Activated CD4-positive, alpha-beta T cell treated with anti-CD3 and anti-CD28 coated beads for 36 hours (primary cell): ENCODE measurements at regions of chr17 and their contacts with region 1.

Region 1: DNA sequence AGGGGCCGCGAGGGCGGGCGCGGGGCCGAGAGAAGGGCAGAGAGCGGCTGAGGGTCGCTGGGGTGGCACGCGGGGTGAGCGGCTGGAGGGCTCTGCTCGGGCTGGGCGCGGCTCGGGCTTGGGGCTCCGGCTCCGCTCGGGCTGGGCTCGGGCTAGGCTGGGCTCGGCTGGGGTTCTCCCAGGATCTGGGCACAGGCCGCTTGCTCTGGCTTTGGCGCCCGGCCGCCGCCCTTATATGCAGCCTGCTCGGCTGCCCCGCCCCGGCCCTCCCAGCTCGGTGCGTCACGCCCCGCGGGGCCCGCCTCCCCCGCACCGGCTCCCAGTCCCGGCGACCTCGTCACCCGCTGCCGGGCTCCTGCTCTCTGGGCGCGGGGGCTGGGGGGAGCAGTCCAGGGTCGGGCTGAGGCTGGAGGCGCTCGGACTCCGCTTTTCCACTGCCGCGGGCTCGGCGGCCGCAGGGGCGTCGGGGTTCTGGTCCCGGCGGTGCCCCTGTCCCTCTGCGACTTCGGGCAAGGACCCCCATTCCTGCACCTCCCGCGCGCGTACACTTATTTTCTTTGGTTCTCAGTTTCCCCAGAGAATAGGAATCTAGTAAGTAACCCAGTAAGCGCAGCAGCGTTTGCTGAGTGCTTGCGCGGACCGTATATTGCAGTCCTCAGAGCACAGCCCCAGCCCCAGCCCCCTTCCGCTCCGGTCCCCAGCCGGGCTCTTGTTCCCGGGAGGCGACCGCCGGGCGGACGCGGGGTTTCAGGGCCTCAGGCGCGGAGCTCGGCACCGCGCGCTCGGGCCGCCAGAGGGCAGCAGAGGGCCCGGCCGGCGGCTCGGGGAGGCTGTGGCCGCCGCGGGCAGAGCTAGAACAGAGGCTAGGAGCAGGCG is at the start of gene RASD1:
- DNase-seq: peak; percentile 91
- ATAC-seq: peak; percentile 89
- H3K4me3 Mint-ChIP-seq: peak within 1 kb of the TSS; percentile 56
- H3K27ac Mint-ChIP-seq: no peak within 1 kb of the TSS
- H3K4me1 Mint-ChIP-seq: peaks cover 11% of the 10 kb centered on the region
- H3K27me3 Mint-ChIP-seq: peaks cover 5% of the 10 kb centered on the region
- total RNA-seq, gene RASD1: 0.18 to 0.21 TPM

Region 2: GRCh38 chr17:17303010-17303846 is 193.2 kb before region 1 on chr17 and contains the start of gene NT5M:
- CTCF ChIA-PET with region 1: no interaction called
- POLR2A ChIA-PET with region 1: no interaction called
- intact Hi-C with region 1: no loop called
- DNase-seq: peak; percentile 84
- ATAC-seq: peak; percentile 58
- H3K4me3 Mint-ChIP-seq: peak within 1 kb of the TSS; percentile 71
- H3K27ac Mint-ChIP-seq: peak within 1 kb of the TSS; percentile 87
- H3K4me1 Mint-ChIP-seq: peaks cover 28% of the 10 kb centered on the region
- H3K27me3 Mint-ChIP-seq: no peaks in the 10 kb centered on the region
- total RNA-seq, gene NT5M: 4.3 to 5.4 TPM

Region 3: GRCh38 chr17:17391668-17392370 is 104.6 kb before region 1 on chr17:
- CTCF ChIA-PET with region 1: interaction called, 10 read pairs
- POLR2A ChIA-PET with region 1: no interaction called
- intact Hi-C with region 1: loop called in 1 of 2 experiments (anchors 1 kb)
- DNase-seq: peak; percentile 80
- ATAC-seq: peak; percentile 87
- H3K4me3 Mint-ChIP-seq: peak overlapping the region; percentile 66
- H3K27ac Mint-ChIP-seq: no peak overlapping the region
- H3K4me1 Mint-ChIP-seq: peaks cover 13% of the 10 kb centered on the region
- H3K27me3 Mint-ChIP-seq: no peaks in the 10 kb centered on the region

Region 4: GRCh38 chr17:17484451-17484899 is 12.0 kb before region 1 on chr17:
- CTCF ChIA-PET with region 1: interaction called, 3 read pairs
- POLR2A ChIA-PET with region 1: interaction called, 3 read pairs
- intact Hi-C with region 1: loop called in 1 of 2 experiments (anchors 1 kb)
- DNase-seq: peak; percentile 84
- ATAC-seq: peak; percentile 100
- H3K4me3 Mint-ChIP-seq: no peak overlapping the region
- H3K27ac Mint-ChIP-seq: peak overlapping the region; percentile 68
- H3K4me1 Mint-ChIP-seq: peaks cover 64% of the 10 kb centered on the region
- H3K27me3 Mint-ChIP-seq: no peaks in the 10 kb centered on the region

Region 5: DNA sequence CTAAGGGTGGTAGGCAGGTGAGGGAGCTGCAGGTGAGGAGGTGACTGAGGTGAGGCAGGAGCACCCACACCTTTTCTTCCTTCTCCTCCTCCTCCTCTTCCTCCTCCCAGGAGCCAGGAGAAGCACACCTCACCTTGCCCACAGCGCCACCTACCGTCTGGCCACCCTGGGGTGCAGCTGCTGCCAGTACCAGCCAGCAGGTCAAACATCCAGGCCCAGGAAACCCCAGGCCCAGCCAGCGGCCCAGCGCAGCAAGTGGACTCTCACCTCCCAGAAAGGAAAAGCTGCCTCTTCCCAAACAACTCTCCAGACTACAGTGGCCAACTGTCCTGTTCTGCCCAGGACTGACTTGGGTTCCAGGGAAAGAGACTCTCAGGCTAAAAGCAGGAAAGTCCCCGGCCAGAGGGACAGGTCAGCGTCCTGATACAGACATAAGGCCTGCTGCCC is 72.3 kb after region 1 on chr17:
- CTCF ChIA-PET with region 1: interaction called, 12 read pairs
- POLR2A ChIA-PET with region 1: interaction called, 4 read pairs
- intact Hi-C with region 1: loop called (anchors 1 kb)
- DNase-seq: peak; percentile 84
- ATAC-seq: peak; percentile 71
- H3K4me3 Mint-ChIP-seq: no peak overlapping the region
- H3K27ac Mint-ChIP-seq: no peak overlapping the region
- H3K4me1 Mint-ChIP-seq: no peaks in the 10 kb centered on the region
- H3K27me3 Mint-ChIP-seq: no peaks in the 10 kb centered on the region